ENCODE measurements at regions of chr3 and their contacts with region 1.

Region 1: DNA sequence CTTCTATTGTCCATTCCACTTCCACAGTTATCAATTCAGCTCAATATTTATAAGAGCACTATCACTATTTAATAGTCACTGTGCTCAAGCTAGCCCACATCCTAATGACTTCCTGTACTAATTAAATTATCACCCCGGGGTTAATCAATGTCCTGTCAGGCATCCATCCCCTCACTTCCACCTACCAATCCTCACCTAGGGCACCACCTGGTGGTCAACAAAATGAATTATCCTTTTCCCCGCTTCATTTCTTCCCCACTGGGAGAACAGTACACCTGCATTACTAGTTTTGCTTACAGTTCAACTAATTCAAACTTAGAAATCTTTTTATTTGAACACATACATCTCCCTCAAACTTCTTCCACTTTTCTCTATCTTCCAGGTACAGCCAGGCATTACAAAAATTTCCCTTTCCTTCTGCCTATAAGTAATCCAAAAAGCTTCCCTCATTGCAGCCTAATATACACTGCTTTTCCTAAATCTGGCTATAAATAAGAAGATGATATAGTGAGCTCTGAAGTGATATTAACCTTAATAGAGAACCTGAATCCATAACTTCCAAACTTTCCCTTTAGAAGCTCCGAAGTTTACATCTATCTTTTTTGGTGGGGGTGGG is 68.5 kb downstream of the TMCC1 start:
- H3K4me3 Mint-ChIP-seq: no peak overlapping the region
- H3K27ac Mint-ChIP-seq: peak overlapping the region; percentile 7
- H3K4me1 Mint-ChIP-seq: peaks cover 40% of the 10 kb centered on the region
- H3K27me3 Mint-ChIP-seq: no peaks in the 10 kb centered on the region

Region 2: GRCh38 chr3:129383292-129383860 is 441.7 kb before region 1 on chr3:
- intact Hi-C with region 1: loop called (anchors 10 kb)
- H3K4me3 Mint-ChIP-seq: no peak overlapping the region
- H3K27ac Mint-ChIP-seq: no peak overlapping the region
- H3K4me1 Mint-ChIP-seq: peaks cover 9% of the 10 kb centered on the region
- H3K27me3 Mint-ChIP-seq: no peaks in the 10 kb centered on the region

Region 3: DNA sequence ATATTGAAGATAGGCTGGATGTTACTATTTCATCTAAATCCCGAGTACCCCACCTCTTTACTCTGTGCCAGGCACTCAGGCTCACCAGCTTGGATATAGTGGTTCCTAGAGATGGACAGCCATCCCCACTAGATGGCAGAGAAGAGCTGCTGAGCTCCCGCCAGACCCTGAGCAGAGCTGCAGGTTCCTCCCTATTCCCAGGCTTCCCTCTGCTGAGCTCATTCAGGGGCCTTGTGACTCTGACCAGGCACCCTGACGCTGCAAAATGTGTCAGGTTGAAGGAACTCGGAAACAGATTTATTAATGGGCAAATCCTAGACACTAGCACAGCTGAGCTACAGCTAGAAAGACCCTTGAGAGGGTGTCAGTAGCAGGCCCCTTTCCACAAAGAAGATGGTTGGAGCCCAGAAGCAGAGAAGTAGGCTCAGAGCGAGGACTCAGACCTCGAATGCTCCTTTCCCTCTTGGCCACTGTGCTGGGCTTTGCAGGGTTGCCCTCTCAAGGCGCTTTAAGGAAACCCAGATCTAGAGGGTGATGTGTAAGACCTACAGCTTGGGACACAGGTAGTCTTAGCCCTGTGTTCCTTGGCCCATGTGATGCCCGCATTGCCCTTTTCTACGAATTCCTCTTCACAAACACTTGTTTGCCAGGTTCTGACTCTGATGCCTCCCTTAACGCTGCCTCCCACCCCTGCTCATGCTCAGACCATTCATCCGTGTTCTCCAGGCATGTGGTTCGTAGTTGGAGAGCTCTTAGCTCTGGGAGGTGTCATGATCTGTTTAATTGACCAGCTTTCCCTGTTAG is 334.6 kb before region 1 on chr3:
- intact Hi-C with region 1: loop called (anchors 2 kb)
- H3K4me3 Mint-ChIP-seq: no peak overlapping the region
- H3K27ac Mint-ChIP-seq: peak overlapping the region; percentile 55
- H3K4me1 Mint-ChIP-seq: peaks cover 44% of the 10 kb centered on the region
- H3K27me3 Mint-ChIP-seq: no peaks in the 10 kb centered on the region

Region 4: GRCh38 chr3:129576514-129577352 is 248.3 kb before region 1 on chr3:
- intact Hi-C with region 1: loop called (anchors 5 kb)
- H3K4me3 Mint-ChIP-seq: peak overlapping the region; percentile 9
- H3K27ac Mint-ChIP-seq: peak overlapping the region; percentile 85
- H3K4me1 Mint-ChIP-seq: peaks cover 51% of the 10 kb centered on the region
- H3K27me3 Mint-ChIP-seq: no peaks in the 10 kb centered on the region

Region 5: GRCh38 chr3:129627429-129628168 is 197.4 kb before region 1 on chr3:
- intact Hi-C with region 1: loop called (anchors 2 kb)
- H3K4me3 Mint-ChIP-seq: peak overlapping the region; percentile 81
- H3K27ac Mint-ChIP-seq: peak overlapping the region; percentile 95
- H3K4me1 Mint-ChIP-seq: peaks cover 53% of the 10 kb centered on the region
- H3K27me3 Mint-ChIP-seq: no peaks in the 10 kb centered on the region

Region 6: DNA sequence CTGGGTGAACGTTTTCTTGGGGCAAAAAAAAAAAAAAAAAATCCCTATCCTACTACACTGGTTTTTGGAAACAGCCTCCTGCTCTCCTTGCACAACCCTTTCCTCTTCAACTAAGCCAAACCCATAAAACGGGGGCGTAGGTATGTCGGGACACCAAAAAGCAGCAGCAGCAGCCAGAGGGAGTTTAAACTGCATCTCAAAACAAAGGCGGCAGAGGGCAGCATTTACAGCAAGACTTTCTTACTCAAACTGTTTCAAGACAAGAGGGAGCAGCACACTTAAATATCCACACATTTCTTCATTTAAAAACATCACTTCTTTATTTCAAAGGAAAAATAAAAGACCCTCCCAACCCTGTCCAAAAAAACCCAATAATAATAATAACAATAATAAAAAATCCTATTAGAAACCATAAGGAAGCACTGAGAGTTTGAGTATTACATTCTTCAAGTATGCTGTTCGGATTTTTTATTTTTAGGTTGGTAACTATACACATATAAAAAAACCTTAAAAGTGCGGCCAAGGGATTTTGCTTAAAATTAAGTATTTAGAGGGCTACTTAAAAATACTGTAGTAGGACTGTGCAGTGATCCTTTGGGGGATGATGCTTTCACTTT is 174.7 kb before region 1 on chr3:
- intact Hi-C with region 1: loop called (anchors 2 kb)
- H3K4me3 Mint-ChIP-seq: no peak overlapping the region
- H3K27ac Mint-ChIP-seq: no peak overlapping the region
- H3K4me1 Mint-ChIP-seq: peaks cover 8% of the 10 kb centered on the region
- H3K27me3 Mint-ChIP-seq: no peaks in the 10 kb centered on the region

Region 7: DNA sequence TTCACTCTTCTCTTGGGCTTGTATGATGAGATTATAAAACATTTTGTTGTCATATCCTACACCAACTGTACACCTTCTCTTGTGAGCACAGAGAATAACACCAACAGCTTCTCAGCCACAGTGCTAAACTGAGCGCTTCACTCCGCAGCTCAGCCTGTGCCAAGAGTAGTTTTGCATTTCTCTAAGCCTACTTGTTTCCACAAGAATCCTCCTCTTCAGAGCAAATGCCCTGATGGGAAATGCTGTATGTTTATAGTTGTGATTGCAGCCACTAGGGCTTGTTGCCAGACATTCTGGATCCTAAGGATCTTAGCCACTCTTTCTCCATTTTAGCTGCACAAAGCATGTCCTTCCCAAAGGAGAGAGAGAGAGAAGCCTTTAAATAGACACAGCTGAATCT is 79.8 kb before region 1 on chr3:
- intact Hi-C with region 1: no loop called
- H3K4me3 Mint-ChIP-seq: no peak overlapping the region
- H3K27ac Mint-ChIP-seq: no peak overlapping the region
- H3K4me1 Mint-ChIP-seq: peaks cover under 1% of the 10 kb centered on the region
- H3K27me3 Mint-ChIP-seq: no peaks in the 10 kb centered on the region

Region 8: DNA sequence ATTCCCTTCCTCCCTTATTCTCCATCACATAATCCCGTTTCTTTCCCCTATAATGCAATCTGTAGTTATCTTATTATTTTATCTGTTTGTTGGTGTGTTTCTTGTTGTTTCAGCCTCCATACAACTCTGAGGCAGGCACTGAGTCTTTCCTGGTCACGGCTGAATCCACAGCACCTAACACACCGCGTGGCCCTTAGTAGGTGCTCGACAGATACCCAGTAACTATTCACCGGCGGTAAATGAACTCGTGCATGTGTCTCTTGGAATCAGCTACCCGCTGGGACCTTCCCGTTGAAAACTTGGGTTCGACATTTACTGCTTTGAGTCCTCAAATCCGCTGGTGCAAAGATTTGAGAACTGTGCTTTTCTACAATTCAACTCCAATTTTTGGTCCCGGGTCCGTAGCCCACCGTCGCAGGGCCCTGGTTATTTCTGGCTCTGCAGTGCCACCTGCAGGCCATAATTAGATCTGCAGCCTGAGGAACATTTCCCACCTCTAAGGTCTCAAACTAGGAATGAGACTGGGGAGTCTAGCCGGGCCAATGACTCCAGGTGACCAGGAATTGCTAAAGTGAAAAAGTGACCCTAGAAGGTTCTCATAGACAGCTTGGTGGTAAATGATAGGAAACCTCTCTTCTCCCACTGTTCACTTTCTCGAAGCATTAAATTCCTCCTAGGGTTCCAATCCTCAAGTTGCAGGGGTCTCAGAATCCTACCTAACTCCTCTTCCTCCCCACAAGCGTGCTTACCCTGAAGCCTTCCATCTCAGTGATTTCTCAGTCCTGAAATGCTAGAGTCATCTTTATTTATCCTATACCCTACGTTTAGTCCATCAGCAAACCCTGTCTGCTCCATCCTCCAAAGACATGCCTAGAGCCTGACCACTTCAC is 109.4 kb after region 1 on chr3:
- intact Hi-C with region 1: loop called (anchors 1 kb)
- H3K4me3 Mint-ChIP-seq: peak overlapping the region; percentile 50
- H3K27ac Mint-ChIP-seq: no peak overlapping the region
- H3K4me1 Mint-ChIP-seq: peaks cover 10% of the 10 kb centered on the region
- H3K27me3 Mint-ChIP-seq: peaks cover 5% of the 10 kb centered on the region

Region 9: GRCh38 chr3:129992781-129993180 is 167.7 kb after region 1 on chr3:
- intact Hi-C with region 1: no loop called
- H3K4me3 Mint-ChIP-seq: no peak overlapping the region
- H3K27ac Mint-ChIP-seq: no peak overlapping the region
- H3K4me1 Mint-ChIP-seq: peaks cover under 1% of the 10 kb centered on the region
- H3K27me3 Mint-ChIP-seq: peaks cover 1% of the 10 kb centered on the region

Measured in dendritic cell treated with granulocyte-macrophage colony-stimulating factor and Interleukin-4, amounts not matched to agents 40 ng/mL and 50 ng/mL, for 4 days (primary cell).